Activated T-helper 1 cell treated with anti-CD3 and anti-CD28 coated beads, Interleukin-12 subunit alpha, Interleukin-12 subunit beta, Interleukin-2, Interleukin-4 antibody, amounts not matched to agents 30 ng/mL and 10 ng/mL and 1 ng/mL, durations not matched to agents 14 hours and 24 hours and 36 hours (primary cell): ENCODE measurements at regions of chr14 and their contacts with region 1.

Region 1: GRCh38 chr14:61694830-61695694 is at the start of gene HIF1A:
- DNase-seq: peak; percentile 95
- H3K4me3 Mint-ChIP-seq: peak within 1 kb of the TSS; percentile 94
- H3K27ac Mint-ChIP-seq: peak within 1 kb of the TSS; percentile 97
- H3K4me1 Mint-ChIP-seq: peaks cover 63% of the 10 kb centered on the region
- H3K27me3 Mint-ChIP-seq: no peaks in the 10 kb centered on the region
- total RNA-seq, gene HIF1A: 241 and 247 TPM in 2 replicates

Region 2: DNA sequence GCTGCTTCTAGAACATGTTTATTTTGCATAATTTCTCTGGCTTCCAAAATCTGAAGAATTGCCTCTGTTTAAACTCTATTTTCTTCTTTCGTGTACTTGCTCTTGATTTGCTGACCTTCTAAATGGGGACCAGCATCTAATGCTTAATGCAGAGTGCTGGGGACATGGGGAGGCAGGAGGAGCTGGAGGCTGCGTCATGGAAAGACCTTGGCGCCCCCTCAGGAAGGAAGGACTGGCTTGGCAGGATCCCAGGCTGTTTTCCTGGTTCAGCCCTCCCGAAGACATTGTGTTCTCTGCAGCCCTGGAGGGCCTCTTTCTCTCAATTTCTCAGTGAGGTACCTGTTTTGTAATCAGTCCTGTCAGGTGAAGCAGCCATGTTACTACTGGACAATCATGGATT is 368.2 kb before region 1 on chr14:
- intact Hi-C with region 1: loop called (anchors 5 kb)
- DNase-seq: no peak
- H3K4me3 Mint-ChIP-seq: peak overlapping the region; percentile 93
- H3K27ac Mint-ChIP-seq: peak overlapping the region; percentile 86
- H3K4me1 Mint-ChIP-seq: peaks cover 77% of the 10 kb centered on the region
- H3K27me3 Mint-ChIP-seq: no peaks in the 10 kb centered on the region

Region 3: GRCh38 chr14:61503167-61503801 is 191.8 kb before region 1 on chr14:
- intact Hi-C with region 1: loop called (anchors 1 kb)
- DNase-seq: peak; percentile 51
- H3K4me3 Mint-ChIP-seq: peak overlapping the region; percentile 76
- H3K27ac Mint-ChIP-seq: peak overlapping the region; percentile 99
- H3K4me1 Mint-ChIP-seq: peaks cover 94% of the 10 kb centered on the region
- H3K27me3 Mint-ChIP-seq: no peaks in the 10 kb centered on the region

Region 4: DNA sequence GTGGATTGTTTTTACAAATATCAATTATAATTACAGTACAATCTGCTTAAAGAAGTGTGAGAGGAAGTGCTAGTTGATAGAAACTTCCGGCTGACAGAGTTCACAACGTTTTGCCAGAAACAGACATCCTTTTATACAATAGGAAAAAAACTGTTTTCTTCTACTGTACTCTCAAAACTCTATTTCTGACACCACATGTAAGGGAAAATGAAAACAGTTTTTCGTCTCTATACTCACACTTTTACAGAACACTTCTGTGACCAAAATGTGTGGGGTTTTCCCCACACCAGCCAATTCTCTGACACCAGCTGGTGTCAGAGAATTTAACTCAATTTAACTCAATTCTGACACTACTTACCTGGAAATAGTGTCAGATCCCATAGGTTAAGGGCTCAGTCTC is 24.0 kb before region 1 on chr14:
- intact Hi-C with region 1: loop called (anchors 1 kb)
- DNase-seq: peak; percentile 42
- H3K4me3 Mint-ChIP-seq: no peak overlapping the region
- H3K27ac Mint-ChIP-seq: no peak overlapping the region
- H3K4me1 Mint-ChIP-seq: peaks cover 9% of the 10 kb centered on the region
- H3K27me3 Mint-ChIP-seq: no peaks in the 10 kb centered on the region

Region 5: GRCh38 chr14:61750708-61751474 is 55.8 kb after region 1 on chr14:
- intact Hi-C with region 1: loop called (anchors 2 kb)
- DNase-seq: peak; percentile 85
- H3K4me3 Mint-ChIP-seq: peak overlapping the region; percentile 95
- H3K27ac Mint-ChIP-seq: peak overlapping the region; percentile 94
- H3K4me1 Mint-ChIP-seq: peaks cover 57% of the 10 kb centered on the region
- H3K27me3 Mint-ChIP-seq: no peaks in the 10 kb centered on the region